HEK293 (cell line): ENCODE measurements at regions of chr1 and their contacts with region 1.

Region 1: GRCh38 chr1:219566951-219567947 is 45.7 kb downstream of the ZC3H11B start:
- H3K4me3 ChIP-seq: no peak overlapping the region
- H3K27ac ChIP-seq: no peak overlapping the region
- H3K4me1 ChIP-seq: no peaks in the 10 kb centered on the region
- CTCF ChIP-seq: peak; percentile 63; the same call in 1 of the 2 replicates

Region 2: DNA sequence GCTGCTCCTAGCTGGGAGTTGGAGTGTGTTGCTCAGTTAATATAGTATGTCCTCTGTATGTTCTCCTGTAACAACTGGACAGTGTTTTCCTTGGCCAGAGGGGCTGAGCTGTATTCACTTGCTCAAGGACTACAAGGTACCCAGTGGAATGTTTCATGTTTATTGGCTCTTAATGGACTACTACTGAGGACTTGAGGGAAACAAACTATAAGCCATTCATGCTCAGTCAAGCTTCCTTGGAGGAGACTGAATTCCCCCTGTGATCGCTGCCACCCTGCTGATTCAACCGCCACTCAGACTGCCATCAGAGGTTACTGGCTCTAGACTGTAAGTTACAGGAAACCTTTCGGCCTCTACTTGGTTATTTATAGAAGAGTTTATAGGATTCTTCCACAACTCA is 121.0 kb before region 1 on chr1:
- CTCF ChIA-PET with region 1: no interaction called
- POLR2A ChIA-PET with region 1: no interaction called
- H3K4me3 ChIP-seq: no peak overlapping the region
- H3K27ac ChIP-seq: no peak overlapping the region
- H3K4me1 ChIP-seq: no peaks in the 10 kb centered on the region
- CTCF ChIP-seq: no peak

Region 3: DNA sequence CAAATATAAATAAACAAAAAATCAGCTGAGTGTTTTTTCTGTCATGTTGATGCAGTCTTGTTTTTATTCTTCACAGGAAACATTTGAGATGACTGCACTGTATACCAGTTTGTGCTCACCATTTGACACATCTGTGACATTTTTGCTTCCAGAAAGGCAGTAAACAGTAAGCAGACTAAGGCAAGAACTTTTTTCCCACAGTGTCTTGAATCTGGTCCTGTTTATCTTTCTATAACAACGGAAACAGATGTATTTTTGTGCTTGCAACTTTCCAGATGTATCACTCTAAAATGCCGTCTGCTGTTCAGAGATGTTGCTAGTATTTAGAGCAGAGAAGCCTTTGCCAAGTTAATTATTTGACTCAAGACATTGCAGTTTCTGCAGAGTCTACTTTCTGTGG is 59.8 kb before region 1 on chr1:
- CTCF ChIA-PET with region 1: no interaction called
- POLR2A ChIA-PET with region 1: no interaction called
- H3K4me3 ChIP-seq: no peak overlapping the region
- H3K27ac ChIP-seq: no peak overlapping the region
- H3K4me1 ChIP-seq: no peaks in the 10 kb centered on the region
- CTCF ChIP-seq: no peak

Region 4: GRCh38 chr1:219555031-219555692 is 12.1 kb before region 1 on chr1:
- CTCF ChIA-PET with region 1: interaction called, 17 read pairs
- POLR2A ChIA-PET with region 1: no interaction called
- H3K4me3 ChIP-seq: no peak overlapping the region
- H3K27ac ChIP-seq: no peak overlapping the region
- H3K4me1 ChIP-seq: no peaks in the 10 kb centered on the region
- CTCF ChIP-seq: no peak

Region 5: DNA sequence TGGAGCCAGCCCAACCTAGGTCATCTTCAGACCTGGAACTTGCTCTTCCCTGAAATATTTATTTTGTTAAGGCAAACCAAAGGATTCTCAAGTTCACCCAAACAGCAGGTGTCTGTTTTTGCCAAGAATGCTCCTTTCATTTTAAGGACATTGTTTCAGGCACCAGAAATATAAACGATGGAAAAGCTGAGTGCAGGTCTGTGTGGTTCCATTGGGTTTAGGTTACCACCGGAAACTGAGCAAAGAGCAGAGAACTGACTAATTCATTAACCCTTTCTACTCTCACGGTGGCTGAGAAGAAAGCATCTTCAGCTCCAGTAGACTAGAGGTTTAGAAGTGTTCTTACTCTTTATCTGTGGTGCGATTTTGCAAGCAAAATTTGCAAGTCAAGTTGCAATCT is 83.6 kb after region 1 on chr1:
- CTCF ChIA-PET with region 1: no interaction called
- POLR2A ChIA-PET with region 1: no interaction called
- H3K4me3 ChIP-seq: no peak overlapping the region
- H3K27ac ChIP-seq: no peak overlapping the region
- H3K4me1 ChIP-seq: peaks cover 2% of the 10 kb centered on the region; the same call in 1 of the 2 replicates
- CTCF ChIP-seq: no peak